Activated CD4-positive, alpha-beta T cell treated with anti-CD3 and anti-CD28 coated beads, Interleukin-2, amount 10 ng/mL, durations not matched to agents 24 days and 14 days (primary cell): ENCODE measurements at regions of chr2 and their contacts with region 1.

Region 1: DNA sequence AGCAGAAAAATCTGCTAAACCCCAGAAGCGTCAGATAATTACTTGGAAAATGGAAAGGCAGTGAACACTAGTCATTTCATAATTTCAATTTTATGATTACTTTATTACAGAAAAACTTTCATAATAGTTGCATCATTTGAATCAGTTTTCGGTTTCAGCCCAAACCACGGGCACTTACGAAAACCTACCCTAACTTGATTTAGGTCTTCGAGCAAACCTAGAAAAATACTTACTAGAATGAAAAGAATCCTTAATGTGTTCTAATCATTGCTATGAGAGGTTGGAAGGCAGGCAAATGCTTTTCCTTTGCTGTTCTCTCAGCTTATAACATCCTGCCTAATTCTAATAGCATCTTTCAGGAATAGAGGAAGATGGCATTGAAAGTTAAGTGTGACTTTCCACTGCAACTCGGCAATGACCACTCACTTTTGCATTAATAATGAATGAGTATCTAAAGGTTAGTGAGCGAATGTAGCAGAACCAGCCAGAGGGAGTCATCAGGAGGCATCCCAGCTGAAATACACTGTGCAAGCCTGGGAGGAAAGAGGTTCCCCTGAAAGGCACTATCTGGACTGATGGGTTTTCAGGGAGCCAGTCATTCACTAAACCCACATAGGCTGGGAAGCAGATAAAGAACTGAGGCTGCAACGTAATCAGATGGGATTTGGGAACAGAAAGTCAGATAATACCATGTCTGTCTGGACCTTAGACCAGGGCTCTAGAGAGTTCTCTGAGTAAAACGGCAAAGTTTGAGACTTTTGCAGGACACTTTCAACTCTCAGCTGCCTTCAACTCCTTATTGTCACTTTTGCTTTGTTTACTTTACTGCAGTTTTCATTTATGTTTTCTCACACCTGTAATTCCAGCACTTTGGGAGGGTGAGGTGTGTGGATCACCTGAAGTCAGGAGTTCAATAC is 520.8 kb downstream of the RNF144A start:
- DNase-seq: peak; percentile 75
- H3K4me3 Mint-ChIP-seq: peak overlapping the region; percentile 53
- H3K27ac Mint-ChIP-seq: peak overlapping the region; percentile 96
- H3K4me1 Mint-ChIP-seq: peaks cover 65% of the 10 kb centered on the region
- H3K27me3 Mint-ChIP-seq: no peaks in the 10 kb centered on the region

Region 2: DNA sequence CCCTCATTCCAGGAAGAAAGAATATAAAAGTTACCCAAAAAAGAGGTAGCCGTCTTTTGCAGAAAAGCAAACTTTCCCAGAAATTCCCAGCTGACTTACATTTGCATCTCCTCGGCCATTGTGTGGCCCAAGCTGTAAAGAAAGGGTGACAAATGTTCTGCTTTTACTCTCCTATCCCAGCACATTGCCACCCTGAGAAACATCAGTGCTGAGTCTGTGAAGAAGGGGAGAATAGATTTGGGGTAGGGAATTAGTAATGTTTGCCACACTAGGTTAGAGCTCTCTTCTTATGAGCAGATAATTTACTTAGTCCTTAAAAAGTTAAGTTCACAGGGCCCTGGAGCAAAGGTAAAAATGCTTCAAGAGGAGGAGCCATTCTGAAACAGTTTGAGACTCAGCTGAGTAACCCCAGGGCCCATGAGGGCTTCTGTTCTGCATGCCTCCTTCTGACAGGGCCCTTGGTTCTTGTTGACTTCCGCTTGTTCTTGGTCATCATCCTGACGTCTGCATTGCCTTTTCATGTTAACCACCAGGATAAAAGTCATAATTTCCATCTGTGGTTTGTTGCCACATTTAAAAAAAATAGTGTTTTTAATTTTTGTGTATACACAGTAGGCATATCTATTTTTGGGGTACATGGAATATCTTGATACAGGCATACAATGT is 29.9 kb after region 1 on chr2:
- intact Hi-C with region 1: loop called (anchors 1 kb)
- DNase-seq: peak; percentile 85
- H3K4me3 Mint-ChIP-seq: peak overlapping the region; percentile 51
- H3K27ac Mint-ChIP-seq: peak overlapping the region; percentile 97
- H3K4me1 Mint-ChIP-seq: peaks cover 36% of the 10 kb centered on the region
- H3K27me3 Mint-ChIP-seq: no peaks in the 10 kb centered on the region

Region 3: DNA sequence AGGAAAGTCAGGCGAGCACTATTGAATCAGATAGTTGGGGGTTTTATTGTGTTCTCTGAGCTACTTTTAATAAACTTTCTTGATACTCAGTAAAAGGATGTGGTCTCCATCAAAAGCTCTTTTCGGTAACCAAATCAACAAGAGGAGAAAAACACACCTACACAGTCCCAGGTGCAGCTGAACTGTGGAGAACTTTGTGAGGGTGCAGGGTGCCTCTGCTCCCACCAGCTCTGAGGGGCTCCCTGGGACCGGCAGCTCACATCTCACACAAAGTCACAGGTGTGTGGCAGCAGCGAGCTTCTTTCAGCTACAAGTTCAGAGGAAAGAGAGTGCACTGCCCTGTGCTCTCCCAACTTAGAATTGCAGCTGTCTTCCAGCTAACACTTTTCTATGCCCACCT is 129.7 kb after region 1 on chr2:
- intact Hi-C with region 1: loop called (anchors 1 kb)
- DNase-seq: peak; percentile 89
- H3K4me3 Mint-ChIP-seq: peak overlapping the region; percentile 65
- H3K27ac Mint-ChIP-seq: peak overlapping the region; percentile 97
- H3K4me1 Mint-ChIP-seq: peaks cover 58% of the 10 kb centered on the region
- H3K27me3 Mint-ChIP-seq: no peaks in the 10 kb centered on the region

Region 4: DNA sequence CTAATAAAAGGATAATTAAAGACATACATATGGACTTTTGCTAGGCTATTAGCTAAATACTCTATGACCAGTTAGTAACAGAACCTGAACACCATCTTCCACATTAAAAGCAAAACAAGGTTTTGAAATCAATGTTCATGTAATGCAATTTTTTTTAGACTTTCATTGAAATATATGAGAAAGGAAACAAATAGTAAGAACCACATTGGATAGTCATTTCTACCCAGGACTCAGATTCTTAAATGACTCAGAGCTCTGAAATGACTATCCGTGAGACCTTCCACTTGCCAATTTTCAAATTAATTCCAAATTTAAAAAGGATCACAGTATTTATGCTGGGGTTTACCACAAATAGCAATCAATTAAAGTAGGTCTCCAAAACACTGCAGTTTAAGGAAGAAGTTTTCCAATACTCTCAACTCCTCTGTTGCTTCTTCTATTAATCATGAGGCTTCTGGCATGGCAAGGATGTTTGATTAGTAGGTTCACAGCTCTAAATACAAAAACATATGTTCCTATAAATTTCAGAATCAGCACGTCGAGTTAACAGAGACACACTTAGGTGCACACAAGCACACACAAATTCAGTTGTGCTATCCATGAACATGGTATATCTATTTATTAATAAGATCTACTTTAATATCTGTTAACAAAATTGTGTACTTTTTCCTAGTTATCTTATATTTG is 320.2 kb after region 1 on chr2:
- intact Hi-C with region 1: loop called (anchors 5 kb)
- DNase-seq: peak; percentile 43
- H3K4me3 Mint-ChIP-seq: peak overlapping the region; percentile 15
- H3K27ac Mint-ChIP-seq: peak overlapping the region; percentile 82
- H3K4me1 Mint-ChIP-seq: peaks cover 16% of the 10 kb centered on the region
- H3K27me3 Mint-ChIP-seq: no peaks in the 10 kb centered on the region

Region 5: GRCh38 chr2:8049851-8050571 is 612.0 kb after region 1 on chr2:
- intact Hi-C with region 1: loop called (anchors 5 kb)
- DNase-seq: peak; percentile 81
- H3K4me3 Mint-ChIP-seq: peak overlapping the region; percentile 7
- H3K27ac Mint-ChIP-seq: peak overlapping the region; percentile 84
- H3K4me1 Mint-ChIP-seq: peaks cover 23% of the 10 kb centered on the region
- H3K27me3 Mint-ChIP-seq: no peaks in the 10 kb centered on the region